ENCODE measurements at regions of chr19 and their contacts with region 1.

Region 1: DNA sequence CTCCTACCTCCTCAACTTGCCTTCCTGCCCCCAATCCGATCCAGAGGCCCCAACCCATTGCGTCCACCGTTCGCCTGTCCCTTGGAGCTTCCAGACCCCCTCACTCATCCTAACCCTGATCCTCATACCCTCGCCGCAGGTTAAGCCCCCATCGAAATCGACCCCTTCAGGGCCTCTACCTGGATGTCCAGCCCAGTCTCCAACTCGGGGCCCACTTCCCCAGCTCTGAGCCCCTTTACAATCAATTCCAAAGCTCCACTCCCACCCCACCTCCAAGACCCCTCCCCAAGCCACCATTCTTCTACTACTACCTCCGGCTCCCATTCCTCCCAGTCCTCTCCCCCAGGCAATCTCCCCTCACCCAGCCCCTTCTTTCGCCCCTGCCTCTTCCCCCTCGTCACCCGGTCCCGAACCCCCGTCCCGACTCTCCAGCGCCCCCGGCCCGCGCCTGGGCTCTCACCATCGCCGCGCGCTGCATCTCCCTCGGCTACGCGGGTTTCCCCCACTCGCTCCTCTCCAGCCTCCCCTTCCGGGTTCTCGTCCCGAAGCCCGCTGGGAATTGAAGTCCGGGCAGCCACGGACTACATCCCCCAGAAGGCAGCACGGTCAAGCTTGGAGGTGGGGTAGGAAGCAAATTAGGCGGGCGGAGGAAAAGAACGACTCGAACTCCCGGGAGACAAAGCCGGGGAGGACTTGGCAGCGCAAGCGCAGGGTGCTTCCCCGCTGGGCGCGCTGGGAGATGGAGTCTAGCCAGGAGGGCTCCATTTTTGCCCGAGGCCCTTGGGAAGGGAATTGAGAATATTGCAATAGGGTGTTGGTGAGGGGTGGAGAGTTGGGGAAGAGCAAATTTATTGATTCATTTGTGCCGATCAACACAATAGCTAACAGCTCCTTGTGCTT is at the start of gene FBXO46:
- DNase-seq: peak; percentile 81 to 97
- ATAC-seq: peak; percentile 99 to 100 (median 99)
- H3K4me3 ChIP-seq: peak within 1 kb of the TSS; percentile 84
- H3K4me3 Mint-ChIP-seq: peak within 1 kb of the TSS; percentile 95
- H3K27ac ChIP-seq: peak within 1 kb of the TSS; percentile 79
- H3K27ac Mint-ChIP-seq: peak within 1 kb of the TSS; percentile 90 to 97
- H3K4me1 ChIP-seq: peaks cover 20% of the 10 kb centered on the region
- H3K4me1 Mint-ChIP-seq: peaks cover 25 to 34% of the 10 kb centered on the region in 2 donors
- H3K27me3 ChIP-seq: no peaks in the 10 kb centered on the region
- H3K27me3 Mint-ChIP-seq: no peaks in the 10 kb centered on the region
- CTCF ChIP-seq: no peak
- total RNA-seq, gene FBXO46: 24.8 to 35.7 (median 31.1) TPM

Region 2: GRCh38 chr19:45717166-45717982 is 13.3 kb before region 1 on chr19:
- intact Hi-C with region 1: loop called (anchors 1 kb)
- DNase-seq: peak; percentile 95 to 98
- ATAC-seq: peak; percentile 94 to 99 (median 95)
- H3K4me3 ChIP-seq: peak overlapping the region; percentile 63
- H3K4me3 Mint-ChIP-seq: peak overlapping the region; percentile 98
- H3K27ac ChIP-seq: peak overlapping the region; percentile 96
- H3K27ac Mint-ChIP-seq: peak overlapping the region; percentile 90 to 93
- H3K4me1 ChIP-seq: peaks cover 18% of the 10 kb centered on the region
- H3K4me1 Mint-ChIP-seq: peaks cover 25 to 35% of the 10 kb centered on the region in 2 donors
- H3K27me3 ChIP-seq: no peaks in the 10 kb centered on the region
- H3K27me3 Mint-ChIP-seq: no peaks in the 10 kb centered on the region
- CTCF ChIP-seq: no peak